Heart right ventricle (tissue), 16 donors: ENCODE measurements at regions of chr1 and their contacts with region 1.

Region 1: DNA sequence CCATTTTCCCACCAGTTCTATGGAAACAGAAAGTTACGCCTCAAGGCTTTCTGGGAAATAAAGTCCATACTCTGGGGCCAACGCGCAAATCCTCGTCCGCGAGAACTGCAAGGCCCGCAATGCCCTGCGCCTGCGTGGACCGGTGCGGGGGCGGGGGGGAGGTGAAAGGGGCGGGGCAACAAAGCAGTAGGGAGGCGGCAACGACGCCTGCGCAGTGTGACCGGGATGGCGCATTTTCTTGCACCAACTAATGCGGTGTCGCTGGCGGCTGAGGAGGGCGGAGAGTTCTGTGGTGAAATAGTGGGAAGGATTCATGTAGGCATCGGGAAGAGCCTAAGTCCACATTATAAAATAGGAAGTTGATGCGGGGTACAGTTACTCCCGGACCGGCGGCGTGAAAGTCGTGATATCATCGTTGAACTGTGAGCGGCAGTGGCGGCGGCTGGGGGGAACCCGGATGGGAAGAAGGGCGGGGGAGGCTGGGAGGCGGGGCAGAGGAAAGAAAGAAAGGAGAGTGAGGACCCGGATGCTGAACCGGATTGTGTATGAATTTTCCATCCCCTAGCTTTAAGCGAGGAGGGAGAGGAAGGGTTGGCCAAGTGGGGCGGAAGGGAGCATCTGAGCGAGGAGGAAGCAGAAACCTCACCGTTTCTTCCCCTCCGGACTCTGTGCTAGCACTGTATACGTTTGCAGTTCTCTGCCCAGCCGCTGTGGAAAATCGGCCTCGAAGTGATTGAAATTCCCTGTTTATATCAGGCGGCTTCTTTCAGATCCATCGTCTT is at the start of gene GGPS1:
- DNase-seq: peak; percentile 98
- ATAC-seq: peak; percentile 91 to 98 (median 95)
- H3K4me3 ChIP-seq: peak within 1 kb of the TSS; percentile 81 to 97 (median 94)
- H3K27ac ChIP-seq: peak within 1 kb of the TSS; percentile 90 to 99 (median 96)
- H3K4me1 ChIP-seq: peaks cover 0 to 74% (median 66%) of the 10 kb centered on the region in 9 donors
- H3K27me3 ChIP-seq: no peaks in the 10 kb centered on the region
- CTCF ChIP-seq: no peak
- total RNA-seq, gene GGPS1: 27.6 to 40.0 (median 35.0) TPM

Region 2: DNA sequence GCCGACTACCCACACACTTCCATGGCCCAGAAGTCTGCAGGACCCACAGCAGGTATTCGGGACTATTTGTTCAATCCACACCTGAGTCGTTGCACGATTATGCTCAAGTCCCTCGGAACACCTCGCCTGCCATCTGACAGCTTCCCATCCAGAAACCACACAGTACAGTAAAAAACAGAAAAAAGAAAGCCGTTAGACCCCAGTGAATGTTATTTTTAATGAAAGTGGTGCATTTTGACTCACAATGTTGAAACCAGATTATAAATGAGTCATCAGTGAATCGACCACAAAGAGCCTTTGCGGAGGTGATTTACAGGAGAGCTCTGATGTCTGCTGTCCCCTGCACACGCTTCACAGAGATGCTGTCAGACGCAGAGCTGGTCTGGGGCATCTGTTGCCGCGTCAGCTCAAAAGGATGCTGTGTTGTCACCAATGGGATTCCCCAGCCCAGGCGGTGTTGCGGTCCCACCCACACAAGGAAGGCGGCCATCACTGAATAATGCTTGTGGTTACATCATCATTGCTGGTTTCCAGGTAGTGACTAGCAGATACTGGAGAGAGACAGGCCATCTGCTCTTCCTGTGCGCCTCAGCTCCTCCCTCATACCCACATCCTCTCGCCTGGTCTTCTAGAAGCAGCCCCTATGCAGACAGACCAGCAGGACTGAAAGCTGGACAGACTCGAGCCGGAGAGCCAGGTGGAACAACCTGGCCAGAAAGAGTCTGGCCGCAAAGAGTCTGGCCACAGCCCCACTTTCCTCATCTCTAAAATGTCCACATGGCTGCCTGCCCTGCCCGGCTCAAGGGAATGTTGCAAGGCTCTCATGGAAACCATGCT is 316.7 kb before region 1 on chr1:
- intact Hi-C with region 1: no loop called
- DNase-seq: peak; percentile 45 to 72
- ATAC-seq: peak; percentile 68 to 94 (median 80)
- H3K4me3 ChIP-seq: peak overlapping the region in 1 of 10 donors; percentile 6
- H3K27ac ChIP-seq: peak overlapping the region in 9 of 10 donors; percentile 16 to 88 (median 62)
- H3K4me1 ChIP-seq: peaks cover 3 to 41% (median 17%) of the 10 kb centered on the region in 9 donors
- H3K27me3 ChIP-seq: no peaks in the 10 kb centered on the region
- CTCF ChIP-seq: no peak

Region 3: GRCh38 chr1:235128456-235129328 is 199.9 kb before region 1 on chr1 and contains the start of gene TOMM20:
- intact Hi-C with region 1: loop called in 1 of 10 experiments (anchors 2 kb)
- DNase-seq: peak; percentile 95 to 97
- ATAC-seq: peak; percentile 98 to 99 (median 99)
- H3K4me3 ChIP-seq: peak within 1 kb of the TSS; percentile 55 to 95 (median 76)
- H3K27ac ChIP-seq: peak within 1 kb of the TSS; percentile 30 to 94 (median 90)
- H3K4me1 ChIP-seq: peaks cover 0 to 48% (median 30%) of the 10 kb centered on the region in 9 donors
- H3K27me3 ChIP-seq: no peaks in the 10 kb centered on the region
- CTCF ChIP-seq: peak in 2 of 9 donors; percentile 10 to 24
- total RNA-seq, gene TOMM20: 85.0 to 113 (median 94.6) TPM

Region 4: GRCh38 chr1:235253219-235253962 is 75.2 kb before region 1 on chr1:
- intact Hi-C with region 1: loop called in 7 of 10 experiments (anchors 2 to 10 kb)
- DNase-seq: peak in 1 of 2 donors; percentile 64
- ATAC-seq: peak; percentile 78 to 96 (median 92)
- H3K4me3 ChIP-seq: no peak overlapping the region
- H3K27ac ChIP-seq: no peak overlapping the region
- H3K4me1 ChIP-seq: peaks cover 0 to 14% (median 0%) of the 10 kb centered on the region in 9 donors
- H3K27me3 ChIP-seq: no peaks in the 10 kb centered on the region
- CTCF ChIP-seq: peak; percentile 63 to 92 (median 89)

Region 5: GRCh38 chr1:235259133-235259778 is 69.3 kb before region 1 on chr1:
- intact Hi-C with region 1: loop called in 7 of 10 experiments (anchors 2 to 10 kb)
- DNase-seq: no peak
- ATAC-seq: peak in 7 of 8 donors; percentile 16 to 55 (median 42)
- H3K4me3 ChIP-seq: no peak overlapping the region
- H3K27ac ChIP-seq: peak overlapping the region in 1 of 10 donors; percentile 5
- H3K4me1 ChIP-seq: peaks cover 0 to 38% (median 23%) of the 10 kb centered on the region in 9 donors
- H3K27me3 ChIP-seq: no peaks in the 10 kb centered on the region
- CTCF ChIP-seq: no peak

Region 6: DNA sequence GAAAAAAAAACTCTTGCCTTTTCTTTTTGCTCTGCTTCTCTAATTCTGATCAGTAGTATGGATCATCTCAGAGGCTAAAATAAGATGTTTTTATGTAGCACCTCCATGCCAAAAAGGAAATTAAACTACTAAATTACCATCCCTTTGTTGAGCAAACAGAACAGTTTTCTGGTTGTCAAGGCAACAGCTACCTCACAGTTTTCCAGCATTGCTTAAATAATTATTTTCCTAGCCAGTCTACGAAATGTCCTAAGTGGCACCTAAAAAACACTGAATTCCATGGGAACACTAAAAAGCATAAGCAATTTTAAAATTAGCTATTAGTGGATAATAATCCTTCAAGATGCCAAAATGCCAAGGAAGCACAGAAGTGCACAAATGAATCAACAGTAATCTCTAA is 62.2 kb before region 1 on chr1:
- intact Hi-C with region 1: loop called in 2 of 10 experiments (anchors 5 to 10 kb)
- DNase-seq: no peak
- ATAC-seq: peak in 1 of 8 donors; percentile 16
- H3K4me3 ChIP-seq: no peak overlapping the region
- H3K27ac ChIP-seq: no peak overlapping the region
- H3K4me1 ChIP-seq: peaks cover 3 to 53% (median 39%) of the 10 kb centered on the region in 9 donors
- H3K27me3 ChIP-seq: no peaks in the 10 kb centered on the region
- CTCF ChIP-seq: no peak

Region 7: DNA sequence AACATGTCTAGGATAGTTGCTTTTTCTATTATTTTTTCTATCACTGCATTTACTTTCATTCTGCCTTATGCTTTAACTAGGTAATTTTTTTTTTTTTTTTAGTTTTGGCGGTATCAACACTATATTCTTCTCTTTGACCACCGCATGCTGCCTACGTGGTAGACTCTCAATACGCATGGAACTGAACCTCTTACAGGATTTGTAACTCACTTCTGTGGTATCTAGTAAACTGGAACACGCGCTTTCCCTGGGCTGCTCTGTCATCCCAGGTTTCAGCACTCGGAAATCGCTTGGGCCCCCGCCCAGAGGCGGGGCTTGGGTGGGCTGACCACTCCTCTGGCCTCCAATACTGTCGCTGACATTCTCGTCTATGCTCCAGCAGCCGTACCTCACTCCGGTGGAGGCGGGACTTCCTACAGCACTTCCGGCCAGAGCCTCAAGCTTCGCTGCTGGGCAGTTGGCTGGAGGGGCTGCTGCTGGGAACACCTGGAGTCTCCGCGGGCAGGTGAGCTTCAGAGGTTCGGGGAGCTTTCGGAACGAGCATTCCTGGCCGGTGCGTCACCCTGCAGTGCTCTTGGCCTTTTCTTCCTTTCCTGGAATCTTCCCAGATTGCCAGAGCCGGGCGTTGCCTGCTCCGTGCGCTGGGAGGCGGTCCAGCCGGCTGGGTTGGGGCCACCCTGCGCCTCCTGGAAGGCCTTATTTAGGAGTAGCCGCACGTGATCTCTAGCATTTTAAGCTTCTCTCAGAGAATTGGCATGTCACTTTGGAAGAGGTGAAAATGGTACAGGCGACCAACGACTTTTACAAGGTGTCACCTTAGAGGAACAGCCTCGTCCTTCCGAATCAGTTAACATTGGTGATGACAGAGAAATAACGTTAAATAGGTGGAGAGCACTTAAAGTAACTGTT is 38.7 kb after region 1 on chr1 and contains the start of gene TBCE:
- intact Hi-C with region 1: loop called in 5 of 10 experiments (anchors 1 to 5 kb)
- DNase-seq: peak; percentile 96
- ATAC-seq: peak; percentile 100
- H3K4me3 ChIP-seq: peak within 1 kb of the TSS; percentile 52 to 89 (median 74)
- H3K27ac ChIP-seq: peak within 1 kb of the TSS in 9 of 10 donors; percentile 77 to 88 (median 85)
- H3K4me1 ChIP-seq: peaks cover 0 to 18% (median 9%) of the 10 kb centered on the region in 9 donors
- H3K27me3 ChIP-seq: no peaks in the 10 kb centered on the region
- CTCF ChIP-seq: peak in 3 of 9 donors; percentile 15 to 26 (median 23)
- total RNA-seq, gene TBCE: 9.0 to 24.2 (median 20.0) TPM

Region 8: DNA sequence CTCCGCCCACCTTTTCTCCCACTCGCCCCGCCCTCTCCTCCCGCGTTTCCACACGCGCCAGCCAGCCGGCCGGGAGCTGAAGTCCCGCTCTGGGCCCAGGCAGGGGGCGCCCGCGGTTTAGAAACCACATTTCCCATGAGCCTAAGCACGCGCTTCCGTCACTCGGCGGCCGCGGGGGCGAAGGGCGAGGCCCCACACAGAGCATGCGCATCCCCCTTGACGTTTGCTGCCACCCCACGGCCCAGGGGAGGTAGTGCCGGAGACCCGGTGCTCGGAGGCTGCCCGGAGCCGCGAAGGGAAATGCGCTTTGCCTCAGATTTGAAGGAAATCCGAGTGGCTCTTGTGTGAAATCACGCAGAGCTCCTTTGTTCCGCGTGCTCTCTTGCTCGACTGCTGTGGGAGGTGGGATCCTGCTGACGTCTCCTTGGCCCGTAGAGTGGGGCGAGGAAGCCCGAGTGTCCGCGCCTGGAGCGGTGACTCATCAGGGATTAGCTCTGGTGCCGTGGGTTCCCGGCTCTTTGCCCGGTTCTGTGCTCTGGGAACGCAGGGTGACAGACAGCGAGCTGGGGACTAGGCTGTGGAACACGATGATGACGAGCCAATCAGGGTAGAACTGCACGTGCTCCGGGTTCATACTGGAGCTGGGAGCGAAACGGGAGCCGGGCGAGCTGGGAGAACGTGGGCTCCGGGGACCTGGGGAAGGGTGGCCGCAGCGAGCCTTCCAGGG is 176.1 kb after region 1 on chr1:
- intact Hi-C with region 1: loop called in 2 of 10 experiments (anchors 1 to 2 kb)
- DNase-seq: peak; percentile 99 to 100
- ATAC-seq: peak; percentile 93 to 97 (median 96)
- H3K4me3 ChIP-seq: peak overlapping the region; percentile 54 to 95 (median 68)
- H3K27ac ChIP-seq: peak overlapping the region; percentile 91 to 99 (median 96)
- H3K4me1 ChIP-seq: peaks cover 0 to 36% (median 26%) of the 10 kb centered on the region in 9 donors
- H3K27me3 ChIP-seq: no peaks in the 10 kb centered on the region
- CTCF ChIP-seq: peak; percentile 75 to 98 (median 95)